GM12878 (cell line): ENCODE measurements at regions of chr3 and their contacts with region 1.

Region 1: GRCh38 chr3:57569859-57570450 is 13.9 kb downstream of the PDE12 start:
- DNase-seq: no peak
- ATAC-seq: no peak
- H3K4me3 ChIP-seq: no peak overlapping the region
- H3K27ac ChIP-seq: no peak overlapping the region
- H3K4me1 ChIP-seq: no peaks in the 10 kb centered on the region
- H3K27me3 ChIP-seq: no peaks in the 10 kb centered on the region
- CTCF ChIP-seq: no peak
- EP300 ChIP-seq: no peak
- POLR2A ChIP-seq: no peak
- RAD21 ChIP-seq: no peak

Region 2: DNA sequence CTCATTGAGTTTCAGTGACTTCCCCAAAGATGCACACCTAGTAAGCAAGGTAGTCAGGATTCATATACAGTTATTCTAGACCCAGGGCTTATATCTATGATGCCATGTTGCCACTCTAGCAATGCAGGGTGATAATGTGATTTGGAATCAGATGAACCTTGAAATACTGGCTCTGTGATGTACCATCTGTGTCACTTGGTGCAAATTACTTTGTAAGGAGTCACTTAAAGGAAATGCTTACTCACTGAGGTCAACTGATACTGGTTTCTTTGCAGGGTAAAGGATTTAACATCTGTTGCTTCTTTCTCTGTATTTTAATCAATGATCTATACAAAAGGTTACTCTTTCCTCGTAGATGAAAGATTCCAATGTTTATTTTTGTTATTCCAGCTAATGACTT is 288.2 kb before region 1 on chr3:
- CTCF ChIA-PET with region 1: no interaction called
- POLR2A ChIA-PET with region 1: interaction called, 11 read pairs
- RAD21 ChIA-PET with region 1: no interaction called
- SMC1A ChIA-PET with region 1: no interaction called
- in situ Hi-C with region 1: no loop called
- intact Hi-C with region 1: no loop called
- DNase-seq: no peak
- ATAC-seq: no peak
- H3K4me3 ChIP-seq: no peak overlapping the region
- H3K27ac ChIP-seq: no peak overlapping the region
- H3K4me1 ChIP-seq: no peaks in the 10 kb centered on the region
- H3K27me3 ChIP-seq: no peaks in the 10 kb centered on the region
- CTCF ChIP-seq: no peak
- EP300 ChIP-seq: no peak
- POLR2A ChIP-seq: no peak
- RAD21 ChIP-seq: no peak

Region 3: DNA sequence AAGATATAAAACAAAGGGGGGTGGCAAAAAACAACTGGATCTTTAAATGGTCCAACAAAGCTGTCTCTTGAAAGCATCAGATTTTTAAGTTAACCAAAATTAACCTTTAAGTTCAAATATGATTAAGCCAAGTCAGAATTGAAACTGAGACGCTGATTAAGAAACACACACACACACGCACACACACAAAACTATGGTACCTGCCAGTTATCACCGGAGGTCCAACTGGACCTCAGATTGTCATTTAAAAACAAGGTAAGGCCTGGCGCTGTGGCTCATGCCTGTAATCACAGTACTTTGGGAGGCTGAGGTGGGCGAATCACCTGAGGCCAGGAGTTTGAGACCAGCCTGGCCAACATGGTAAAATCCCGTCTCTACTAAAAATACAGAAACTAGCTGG is 16.8 kb after region 1 on chr3:
- CTCF ChIA-PET with region 1: no interaction called
- POLR2A ChIA-PET with region 1: no interaction called
- RAD21 ChIA-PET with region 1: no interaction called
- SMC1A ChIA-PET with region 1: no interaction called
- in situ Hi-C with region 1: no loop called
- intact Hi-C with region 1: no loop called
- DNase-seq: no peak
- ATAC-seq: no peak
- H3K4me3 ChIP-seq: no peak overlapping the region
- H3K27ac ChIP-seq: no peak overlapping the region
- H3K4me1 ChIP-seq: no peaks in the 10 kb centered on the region
- H3K27me3 ChIP-seq: no peaks in the 10 kb centered on the region
- CTCF ChIP-seq: no peak
- EP300 ChIP-seq: no peak
- POLR2A ChIP-seq: no peak
- RAD21 ChIP-seq: no peak